Activated CD8-positive, alpha-beta T cell treated with anti-CD3 and anti-CD28 coated beads, Interleukin-2, amount 10 ng/mL, durations not matched to agents 7 days and 5 days (primary cell): ENCODE measurements at regions of chr19 and their contacts with region 1.

Region 1: GRCh38 chr19:41531438-41532311 is 44.3 kb upstream of the CEACAM21 start:
- DNase-seq: peak; percentile 88
- ATAC-seq: peak; percentile 75
- H3K4me3 Mint-ChIP-seq: peak overlapping the region; percentile 73
- H3K27ac Mint-ChIP-seq: peak overlapping the region; percentile 80
- H3K4me1 Mint-ChIP-seq: peaks cover 69% of the 10 kb centered on the region
- H3K27me3 Mint-ChIP-seq: peaks cover 26% of the 10 kb centered on the region

Region 2: DNA sequence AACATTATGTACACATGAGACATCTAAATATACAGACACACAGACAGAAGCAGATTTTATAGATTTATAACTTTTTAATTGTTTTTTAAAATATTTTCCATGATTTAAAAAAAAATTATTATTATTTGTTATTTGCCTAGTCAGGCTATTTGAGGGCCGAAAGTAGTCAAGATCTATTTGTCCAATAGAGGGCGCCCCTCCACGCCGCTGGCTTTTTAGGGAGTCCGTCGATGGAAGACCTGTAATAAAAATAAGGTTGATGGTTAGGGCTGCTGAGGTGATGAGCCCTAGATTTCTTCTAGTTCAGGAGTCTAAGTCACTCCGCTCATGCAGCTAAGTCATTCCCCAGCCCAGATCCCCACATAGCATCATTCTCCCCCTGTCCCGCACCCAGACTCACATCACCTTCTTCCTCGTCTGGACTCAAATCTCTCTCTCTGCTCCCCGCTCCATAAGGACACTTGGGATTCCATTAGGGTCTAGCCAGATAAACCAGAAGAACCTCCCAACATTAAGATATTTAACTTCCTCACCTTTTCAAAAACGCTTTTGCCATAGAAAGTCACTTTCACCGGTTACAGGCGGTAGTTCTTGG is 10.4 kb after region 1 on chr19:
- CTCF ChIA-PET with region 1: interaction called, 20 read pairs
- POLR2A ChIA-PET with region 1: interaction called, 7 read pairs
- DNase-seq: peak; percentile 81
- ATAC-seq: no peak
- H3K4me3 Mint-ChIP-seq: no peak overlapping the region
- H3K27ac Mint-ChIP-seq: no peak overlapping the region
- H3K4me1 Mint-ChIP-seq: peaks cover 45% of the 10 kb centered on the region
- H3K27me3 Mint-ChIP-seq: no peaks in the 10 kb centered on the region